GM23248 (cell line): ENCODE measurements at regions of chr7 and their contacts with region 1.

Region 1: GRCh38 chr7:70856866-70857630 is 274.9 kb upstream of the GALNT17 start:
- DNase-seq: peak; percentile 56
- H3K4me3 ChIP-seq: no peak overlapping the region
- H3K27ac ChIP-seq: no peak overlapping the region
- H3K4me1 ChIP-seq: no peaks in the 10 kb centered on the region
- H3K27me3 ChIP-seq: no peaks in the 10 kb centered on the region

Region 2: GRCh38 chr7:71735961-71736556 is 879.0 kb after region 1 on chr7:
- in situ Hi-C with region 1: loop called (anchors 5 kb)
- DNase-seq: peak; percentile 67
- H3K4me3 ChIP-seq: no peak overlapping the region
- H3K27ac ChIP-seq: no peak overlapping the region
- H3K4me1 ChIP-seq: no peaks in the 10 kb centered on the region
- H3K27me3 ChIP-seq: no peaks in the 10 kb centered on the region